Heart right ventricle (tissue), 16 donors: ENCODE measurements at regions of chr2 and their contacts with region 1.

Region 1: DNA sequence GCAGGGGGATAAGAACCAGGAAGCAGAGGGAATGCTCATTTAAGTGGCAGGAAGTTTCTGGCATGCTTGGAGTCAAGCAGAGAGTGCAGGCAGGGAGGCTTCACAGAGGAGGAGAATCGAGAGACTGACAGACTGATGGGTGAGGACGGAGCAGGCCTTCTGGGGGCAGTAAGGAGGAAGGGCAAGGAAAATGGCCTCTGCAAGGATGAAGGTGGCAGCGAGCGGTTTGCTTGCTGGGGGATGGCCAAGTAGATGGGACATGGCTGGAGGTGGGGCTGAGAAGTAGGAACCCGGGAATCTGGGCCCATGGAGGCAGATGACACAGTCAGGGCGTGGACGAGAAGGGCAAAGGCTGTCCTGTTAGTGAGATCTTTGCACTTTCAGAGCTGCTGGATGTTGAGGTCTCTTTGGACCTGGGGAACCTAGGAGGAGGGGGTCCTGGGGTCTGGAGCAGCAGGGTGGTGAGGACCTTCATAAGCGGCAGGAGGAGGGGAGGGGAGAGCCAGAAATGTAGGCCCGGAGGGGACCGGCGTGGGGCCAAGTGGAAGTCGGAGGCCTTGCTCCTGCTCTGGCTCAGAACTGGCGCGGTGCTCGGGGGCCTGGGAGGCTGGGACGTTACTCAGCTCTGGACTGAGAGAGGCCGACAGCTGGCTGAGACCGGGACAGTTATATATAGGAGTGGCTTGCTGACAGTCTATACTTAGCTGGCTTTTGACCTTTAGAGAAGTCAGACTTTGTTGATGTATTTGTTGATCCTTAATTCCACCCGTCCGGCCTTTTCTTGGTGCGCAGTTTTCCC is 15.9 kb downstream of the IGFBP5 start:
- DNase-seq: peak; percentile 86 to 87
- ATAC-seq: peak; percentile 75 to 90 (median 86)
- H3K4me3 ChIP-seq: no peak overlapping the region
- H3K27ac ChIP-seq: peak overlapping the region; percentile 64 to 93 (median 88)
- H3K4me1 ChIP-seq: peaks cover 17 to 65% (median 50%) of the 10 kb centered on the region in 9 donors
- H3K27me3 ChIP-seq: peaks cover 0 to 4% (median 0%) of the 10 kb centered on the region in 7 donors
- CTCF ChIP-seq: no peak

Region 2: GRCh38 chr2:216034065-216034464 is 645.4 kb before region 1 on chr2:
- intact Hi-C with region 1: loop called in 1 of 10 experiments (anchors 10 kb)
- DNase-seq: peak; percentile 44 to 54
- ATAC-seq: peak in 5 of 8 donors; percentile 50 to 70 (median 56)
- H3K4me3 ChIP-seq: no peak overlapping the region
- H3K27ac ChIP-seq: no peak overlapping the region
- H3K4me1 ChIP-seq: peaks cover 0 to 6% (median 0%) of the 10 kb centered on the region in 9 donors
- H3K27me3 ChIP-seq: no peaks in the 10 kb centered on the region
- CTCF ChIP-seq: peak; percentile 70 to 93 (median 91)

Region 3: DNA sequence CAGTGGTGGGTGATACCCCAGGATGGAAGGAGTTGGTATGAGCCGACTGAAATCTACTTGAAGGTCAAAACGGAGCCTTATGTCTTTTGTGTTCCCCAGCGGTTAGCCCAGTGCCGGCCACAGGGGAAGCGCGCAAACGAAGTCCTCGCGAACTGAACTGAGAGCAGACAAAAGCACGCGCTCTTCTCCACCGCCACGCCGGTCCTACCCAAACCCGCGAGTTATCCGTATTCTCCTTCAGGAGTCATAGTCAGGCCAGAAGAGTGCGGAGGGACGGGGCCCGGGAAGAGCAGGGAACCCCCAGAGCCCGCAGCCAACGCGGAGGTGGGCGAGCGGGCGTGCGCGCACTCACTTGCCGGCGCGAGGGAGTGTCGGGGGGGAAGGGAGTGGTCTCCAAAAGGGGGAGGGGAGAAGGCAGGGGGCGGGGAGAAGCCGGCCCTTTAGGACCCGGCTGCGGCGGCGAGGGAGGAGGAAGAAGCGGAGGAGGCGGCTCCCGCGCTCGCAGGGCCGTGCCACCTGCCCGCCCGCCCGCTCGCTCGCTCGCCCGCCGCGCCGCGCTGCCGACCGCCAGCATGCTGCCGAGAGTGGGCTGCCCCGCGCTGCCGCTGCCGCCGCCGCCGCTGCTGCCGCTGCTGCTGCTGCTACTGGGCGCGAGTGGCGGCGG is 46.3 kb before region 1 on chr2 and contains the start of gene IGFBP2:
- intact Hi-C with region 1: no loop called
- DNase-seq: peak; percentile 48 to 61
- ATAC-seq: peak; percentile 41 to 76 (median 60)
- H3K4me3 ChIP-seq: peak within 1 kb of the TSS; percentile 56 to 81 (median 68)
- H3K27ac ChIP-seq: peak within 1 kb of the TSS in 8 of 10 donors; percentile 10 to 74 (median 56)
- H3K4me1 ChIP-seq: peaks cover 0 to 51% (median 30%) of the 10 kb centered on the region in 9 donors
- H3K27me3 ChIP-seq: peaks cover 0 to 42% (median 0%) of the 10 kb centered on the region in 7 donors
- CTCF ChIP-seq: no peak
- total RNA-seq, gene IGFBP2: 26.0 to 361 (median 109) TPM